ENCODE measurements at regions of chr12 and their contacts with region 1.

Region 1: DNA sequence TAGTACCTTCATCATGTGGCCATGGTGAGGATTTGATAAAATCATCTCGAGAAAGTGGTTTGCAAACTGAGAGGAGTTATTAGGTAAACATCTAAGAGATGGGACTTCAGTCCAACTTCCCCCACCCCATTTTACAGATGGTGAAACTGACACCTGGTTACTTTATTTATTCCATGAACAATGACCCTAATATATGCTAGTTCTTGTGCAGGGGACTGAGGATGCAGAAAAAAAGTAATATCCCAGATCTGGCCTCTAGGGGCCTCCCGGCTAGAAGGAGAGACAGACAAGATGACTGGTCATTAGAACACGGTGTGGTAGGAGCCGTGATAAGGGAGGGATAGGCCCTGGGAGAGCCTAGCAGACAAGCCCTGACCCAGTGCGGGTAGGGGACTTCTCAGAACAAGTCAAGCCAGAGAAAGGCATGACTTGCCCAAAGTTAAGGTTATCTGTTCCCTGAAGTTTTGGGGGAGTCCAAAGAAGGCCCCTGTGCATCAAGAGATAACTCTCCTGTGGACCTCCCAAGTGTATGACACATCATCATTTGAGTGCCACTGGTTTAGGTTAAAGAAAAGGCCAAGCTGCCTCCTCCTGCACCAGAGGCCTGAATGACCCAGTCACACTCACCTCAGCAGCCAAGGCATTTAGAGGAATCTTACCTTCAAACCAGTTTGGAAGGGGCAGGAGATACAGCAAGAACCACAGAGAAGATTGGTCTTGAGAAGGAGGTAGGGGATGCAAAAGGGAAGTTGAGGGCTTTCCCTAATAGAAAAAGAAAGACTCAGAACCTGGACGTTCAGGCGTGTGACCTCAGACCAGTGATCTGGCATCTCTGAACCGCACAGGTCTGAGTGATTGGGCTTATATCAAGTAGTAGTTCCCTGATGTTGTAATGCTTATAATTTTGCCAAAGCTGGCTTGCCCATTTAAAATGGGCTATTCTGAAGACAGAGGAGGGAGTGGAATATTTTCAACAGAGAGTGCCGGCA is 1.6 kb downstream of the CMKLR1 start:
- H3K4me3 Mint-ChIP-seq: peak overlapping the region; percentile 94
- H3K27ac Mint-ChIP-seq: peak overlapping the region; percentile 95
- H3K4me1 Mint-ChIP-seq: peaks cover 75% of the 10 kb centered on the region
- H3K27me3 Mint-ChIP-seq: peaks cover 1% of the 10 kb centered on the region

Region 2: DNA sequence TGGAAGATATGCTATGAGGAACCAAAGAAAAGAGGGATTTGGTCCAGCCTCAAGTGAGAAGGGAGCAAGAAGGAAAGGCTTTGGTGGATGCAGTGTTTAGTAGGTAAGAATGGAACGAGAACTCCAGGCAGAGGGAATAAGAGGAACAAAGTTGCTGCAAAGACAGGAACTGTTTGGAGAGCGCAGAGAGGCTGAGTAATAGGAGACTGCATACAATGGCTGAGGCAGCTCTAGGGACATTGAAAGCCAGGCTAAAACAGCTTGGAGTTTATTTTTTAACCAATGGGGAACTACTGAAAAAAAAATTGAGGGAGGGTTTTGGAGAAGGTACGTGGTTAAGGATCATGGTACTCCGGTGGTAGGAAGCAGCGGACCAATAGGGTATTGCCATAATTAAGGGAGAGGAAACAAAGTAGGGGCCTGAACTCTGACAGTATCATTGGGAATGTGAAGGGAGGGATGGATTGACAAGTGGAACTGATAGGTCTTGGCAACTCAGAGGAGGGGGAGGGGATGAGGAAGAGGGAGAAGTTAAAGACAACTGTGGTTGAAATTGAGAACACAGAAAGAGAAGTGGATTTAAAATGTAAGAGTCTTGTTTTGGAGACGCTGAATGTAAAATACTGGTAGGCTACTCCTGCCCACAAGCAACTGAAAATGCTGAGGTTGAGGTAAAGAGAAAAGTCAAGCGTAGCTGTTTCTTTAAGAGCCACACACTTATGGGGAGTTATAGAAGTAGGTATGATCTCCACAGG is 558.3 kb before region 1 on chr12:
- intact Hi-C with region 1: loop called (anchors 5 kb)
- H3K4me3 Mint-ChIP-seq: peak overlapping the region; percentile 71
- H3K27ac Mint-ChIP-seq: peak overlapping the region; percentile 93
- H3K4me1 Mint-ChIP-seq: peaks cover 74% of the 10 kb centered on the region
- H3K27me3 Mint-ChIP-seq: peaks cover 24% of the 10 kb centered on the region

Region 3: DNA sequence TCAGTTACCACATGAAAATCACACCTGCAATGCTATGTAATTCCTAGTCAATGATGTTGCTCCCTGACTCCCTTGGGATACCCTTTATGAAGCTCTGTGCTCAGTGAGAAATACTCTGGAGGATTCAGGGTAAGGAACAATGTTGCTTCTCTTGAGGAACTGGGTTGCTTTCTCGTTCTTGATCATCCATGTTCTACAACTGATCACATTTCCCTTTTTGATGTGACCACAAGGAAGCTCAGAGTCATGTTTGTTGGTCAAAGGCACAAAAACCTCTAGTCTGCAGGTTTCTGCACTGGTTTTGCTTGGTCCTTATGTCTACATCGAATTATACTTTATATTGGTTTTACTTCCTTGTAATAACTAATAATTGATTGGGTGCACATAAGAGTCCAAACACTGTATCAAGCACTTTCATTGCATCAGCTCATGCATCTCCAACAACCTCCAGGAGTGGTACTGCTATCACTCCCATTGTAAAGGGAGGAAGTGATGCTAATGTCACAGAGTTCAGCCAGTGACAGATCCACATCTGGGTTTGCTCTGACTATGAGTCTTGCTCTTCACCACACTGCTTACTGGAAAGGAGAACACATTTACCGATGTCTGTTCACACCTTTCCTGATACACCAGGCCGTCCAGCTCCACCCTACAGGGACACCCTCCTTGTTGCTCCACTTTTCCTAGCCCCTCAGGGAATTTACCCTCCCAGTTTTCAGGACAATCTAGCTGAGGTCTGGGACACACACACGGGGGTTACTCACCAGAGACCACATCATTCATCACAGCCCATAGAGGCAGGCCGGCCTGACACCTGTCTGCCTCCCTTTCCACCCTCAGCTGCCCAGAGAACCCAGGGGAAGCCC is 39.4 kb before region 1 on chr12:
- intact Hi-C with region 1: loop called (anchors 5 kb)
- H3K4me3 Mint-ChIP-seq: peak overlapping the region; percentile 69
- H3K27ac Mint-ChIP-seq: peak overlapping the region; percentile 75
- H3K4me1 Mint-ChIP-seq: peaks cover 91% of the 10 kb centered on the region
- H3K27me3 Mint-ChIP-seq: peaks cover 14% of the 10 kb centered on the region

Region 4: DNA sequence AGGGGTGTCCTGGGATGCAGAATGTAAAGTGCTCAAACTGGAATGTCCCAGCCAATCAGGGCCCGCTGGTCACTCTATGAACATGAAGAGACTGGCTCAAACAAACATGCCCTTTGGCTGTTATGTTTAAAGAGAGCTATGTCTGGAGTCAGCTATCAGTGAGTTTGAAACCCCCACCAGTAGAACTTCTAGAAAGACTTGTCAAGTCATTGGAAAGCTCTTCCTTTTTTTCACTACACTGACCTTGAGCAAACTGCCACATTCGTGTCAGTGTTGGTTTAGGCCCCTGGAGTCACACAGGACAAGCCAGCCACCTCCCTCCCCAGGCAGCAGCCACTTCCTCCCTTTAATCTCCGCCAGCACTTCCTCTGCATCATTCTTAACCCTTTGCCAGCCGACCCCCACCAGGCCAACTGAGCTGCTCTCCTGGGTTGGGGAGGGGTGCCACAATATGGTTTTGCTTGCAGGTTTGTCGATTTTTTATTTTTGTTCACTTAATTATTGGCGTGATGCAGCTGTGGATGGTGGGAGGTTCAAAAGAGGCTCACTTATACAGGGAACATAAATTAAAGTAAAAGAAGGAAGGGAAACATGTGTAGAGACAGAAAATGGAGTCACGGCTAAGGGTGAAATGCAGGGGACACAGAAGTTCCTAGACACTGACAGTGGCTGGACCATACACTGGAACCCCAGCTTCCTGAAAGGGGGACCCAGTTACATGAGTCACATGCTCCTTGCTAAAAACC is 23.8 kb before region 1 on chr12:
- intact Hi-C with region 1: loop called (anchors 2 kb)
- H3K4me3 Mint-ChIP-seq: peak overlapping the region; percentile 60
- H3K27ac Mint-ChIP-seq: peak overlapping the region; percentile 88
- H3K4me1 Mint-ChIP-seq: peaks cover 92% of the 10 kb centered on the region
- H3K27me3 Mint-ChIP-seq: no peaks in the 10 kb centered on the region

Region 5: DNA sequence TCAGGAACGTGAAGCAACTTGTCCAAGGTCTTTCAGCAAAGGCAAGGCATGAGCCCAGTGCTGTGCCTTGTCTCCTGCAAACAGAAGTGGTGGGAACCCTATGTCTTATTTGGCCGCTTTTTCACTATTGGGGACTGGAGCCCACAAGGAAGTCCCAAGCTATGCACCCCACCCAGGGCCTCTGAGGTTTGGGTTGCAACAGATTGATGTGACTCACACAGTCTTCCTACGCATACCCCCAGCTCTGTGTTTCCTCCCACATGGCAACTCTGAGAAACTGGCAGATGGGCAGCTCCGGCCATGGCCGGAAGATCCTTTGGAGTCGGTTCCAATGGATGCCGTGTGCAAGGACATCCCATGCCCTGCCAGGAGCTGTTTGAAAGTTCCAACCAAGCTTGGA is 29.9 kb after region 1 on chr12:
- intact Hi-C with region 1: loop called (anchors 1 kb)
- H3K4me3 Mint-ChIP-seq: no peak overlapping the region
- H3K27ac Mint-ChIP-seq: peak overlapping the region; percentile 14
- H3K4me1 Mint-ChIP-seq: peaks cover 83% of the 10 kb centered on the region
- H3K27me3 Mint-ChIP-seq: no peaks in the 10 kb centered on the region

Measured in dendritic cell treated with granulocyte-macrophage colony-stimulating factor and Interleukin-4, amounts not matched to agents 40 ng/mL and 50 ng/mL, for 4 days (primary cell).